Mammary epithelial cell (primary cell): ENCODE measurements at regions of chr17 and their contacts with region 1.

Region 1: GRCh38 chr17:27430882-27431491 is 25.3 kb upstream of the KSR1 start:
- DNase-seq: peak; percentile 44
- H3K4me3 ChIP-seq: no peak overlapping the region
- H3K27ac ChIP-seq: no peak overlapping the region
- H3K4me1 ChIP-seq: peaks cover 5% of the 10 kb centered on the region
- H3K27me3 ChIP-seq: no peaks in the 10 kb centered on the region
- CTCF ChIP-seq: peak; percentile 84 to 91

Region 2: GRCh38 chr17:27206447-27206846 is 224.5 kb before region 1 on chr17:
- CTCF ChIA-PET with region 1: no interaction called
- dilution Hi-C with region 1: no loop called
- in situ Hi-C with region 1: no loop called
- intact Hi-C with region 1: no loop called
- DNase-seq: no peak
- H3K4me3 ChIP-seq: no peak overlapping the region
- H3K27ac ChIP-seq: no peak overlapping the region
- H3K4me1 ChIP-seq: peaks cover 8% of the 10 kb centered on the region
- H3K27me3 ChIP-seq: no peaks in the 10 kb centered on the region
- CTCF ChIP-seq: peak; percentile 14 to 41

Region 3: GRCh38 chr17:27236717-27237315 is 194.2 kb before region 1 on chr17:
- CTCF ChIA-PET with region 1: no interaction called
- dilution Hi-C with region 1: no loop called
- in situ Hi-C with region 1: no loop called
- intact Hi-C with region 1: loop called (anchors 5 kb)
- DNase-seq: peak; percentile 52
- H3K4me3 ChIP-seq: no peak overlapping the region
- H3K27ac ChIP-seq: no peak overlapping the region
- H3K4me1 ChIP-seq: peaks cover 7% of the 10 kb centered on the region
- H3K27me3 ChIP-seq: no peaks in the 10 kb centered on the region
- CTCF ChIP-seq: peak; percentile 90 to 96

Region 4: DNA sequence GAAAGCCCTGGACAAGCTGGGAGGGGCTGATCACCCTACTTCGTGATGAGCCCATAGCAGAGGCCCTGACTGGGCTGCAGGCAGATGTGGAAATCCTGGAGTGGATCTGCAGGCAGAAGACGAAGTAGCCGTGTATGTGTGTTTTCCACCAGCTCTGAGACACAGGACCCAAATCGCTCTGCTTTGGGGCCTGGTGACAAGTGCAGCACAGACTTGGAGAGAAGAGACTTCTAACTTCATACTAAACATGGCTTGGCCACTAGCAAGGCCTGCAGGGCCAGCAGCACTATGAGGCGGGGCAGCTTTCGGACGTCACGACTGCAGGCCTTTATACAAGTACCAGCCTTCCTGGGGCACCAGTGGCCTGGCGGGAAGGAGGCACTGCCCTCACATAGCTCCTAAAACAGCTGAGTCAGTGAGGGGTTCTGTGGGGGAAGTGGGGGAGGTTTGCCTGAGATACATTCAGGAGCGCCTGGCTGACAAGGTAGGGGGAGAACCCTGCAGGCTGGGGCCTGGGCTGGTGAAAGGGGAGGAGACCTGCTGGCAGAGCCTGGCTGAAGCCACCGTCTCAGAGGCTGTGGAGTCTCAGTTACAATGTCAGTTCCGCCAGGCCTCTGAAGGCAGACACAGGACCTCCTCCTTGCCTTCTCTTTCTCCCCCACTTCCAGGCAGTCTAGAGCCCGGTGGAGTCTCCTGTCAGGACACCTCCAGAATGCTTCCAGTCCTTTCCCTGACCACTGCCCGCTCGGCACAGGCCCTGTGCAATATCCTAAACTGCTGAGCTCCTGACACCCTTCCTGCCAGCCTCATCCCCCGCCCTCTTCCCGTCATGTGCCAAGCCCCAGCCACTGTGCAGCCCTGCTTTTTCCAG is 63.6 kb before region 1 on chr17:
- CTCF ChIA-PET with region 1: no interaction called
- dilution Hi-C with region 1: no loop called
- in situ Hi-C with region 1: no loop called
- intact Hi-C with region 1: no loop called
- DNase-seq: no peak
- H3K4me3 ChIP-seq: no peak overlapping the region
- H3K27ac ChIP-seq: no peak overlapping the region
- H3K4me1 ChIP-seq: no peaks in the 10 kb centered on the region
- H3K27me3 ChIP-seq: no peaks in the 10 kb centered on the region
- CTCF ChIP-seq: no peak

Region 5: DNA sequence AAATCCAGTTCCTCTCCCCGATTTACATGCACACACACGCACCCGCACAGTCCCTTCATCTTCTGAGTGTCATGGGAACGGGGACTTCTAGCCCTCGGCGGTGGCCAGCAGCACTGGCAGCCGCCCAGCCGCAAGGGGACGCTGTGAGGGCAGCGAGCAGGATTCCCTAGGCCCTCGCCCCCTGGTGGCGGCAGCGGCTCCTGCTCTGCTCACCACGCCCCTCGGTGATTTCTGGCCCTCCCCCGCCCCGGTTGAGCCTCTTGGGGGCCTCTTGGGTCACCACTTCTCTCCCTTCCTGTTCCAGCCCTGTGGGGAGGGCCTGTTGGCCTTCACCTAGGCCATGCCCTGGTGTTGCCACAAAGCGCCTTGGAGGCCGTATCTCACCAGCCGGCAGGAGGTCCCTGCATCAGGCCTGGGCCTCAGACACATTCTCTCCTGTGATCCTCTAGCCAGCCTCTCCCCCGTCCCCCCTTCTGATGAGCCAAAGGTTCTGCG is 49.9 kb before region 1 on chr17:
- CTCF ChIA-PET with region 1: no interaction called
- dilution Hi-C with region 1: no loop called
- in situ Hi-C with region 1: no loop called
- intact Hi-C with region 1: loop called (anchors 1 kb)
- DNase-seq: peak; percentile 23
- H3K4me3 ChIP-seq: no peak overlapping the region
- H3K27ac ChIP-seq: no peak overlapping the region
- H3K4me1 ChIP-seq: peaks cover 35% of the 10 kb centered on the region
- H3K27me3 ChIP-seq: no peaks in the 10 kb centered on the region
- CTCF ChIP-seq: peak; percentile 78 to 84

Region 6: DNA sequence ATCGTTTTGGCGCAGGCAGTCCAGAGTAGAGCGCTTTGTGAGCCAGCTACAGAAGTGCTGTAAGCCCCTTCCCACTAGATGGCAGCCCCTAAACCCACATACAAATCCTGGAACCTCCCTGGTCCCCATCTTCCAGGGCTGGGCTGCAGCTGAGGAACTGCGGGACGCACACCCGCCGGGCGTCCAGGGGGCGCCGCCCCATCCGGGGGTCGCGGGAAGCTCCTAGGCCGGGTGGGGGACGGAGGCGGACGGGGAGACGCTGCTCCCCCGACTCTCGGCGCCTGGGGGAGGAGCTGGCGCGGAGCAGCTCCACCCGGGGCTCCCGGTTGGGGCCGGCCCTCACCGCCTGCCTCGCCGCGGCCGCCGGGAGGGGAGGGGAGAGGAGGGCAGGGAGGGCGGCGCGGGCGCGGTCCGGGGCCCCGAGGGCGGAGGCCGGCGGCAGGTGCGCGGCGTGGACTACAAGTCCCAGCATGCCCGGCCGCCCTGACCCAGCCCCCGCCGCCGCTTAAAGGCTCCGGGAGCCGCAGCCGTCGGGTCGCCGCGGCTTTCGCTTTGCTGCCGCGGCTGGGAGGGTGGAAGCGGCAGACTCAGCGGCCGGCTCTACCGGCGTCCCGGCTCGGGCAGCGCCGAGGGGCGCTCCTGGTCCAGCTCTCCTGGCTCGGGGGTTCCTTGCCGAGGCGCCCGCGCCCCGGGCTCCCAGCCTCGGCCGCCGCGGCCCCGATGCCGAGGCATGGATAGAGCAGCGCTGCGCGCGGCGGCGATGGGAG is 25.1 kb after region 1 on chr17 and contains the start of gene KSR1:
- CTCF ChIA-PET with region 1: no interaction called
- dilution Hi-C with region 1: no loop called
- in situ Hi-C with region 1: no loop called
- intact Hi-C with region 1: no loop called
- DNase-seq: peak; percentile 47
- H3K4me3 ChIP-seq: peak within 1 kb of the TSS; percentile 49 to 62 (median 52)
- H3K27ac ChIP-seq: no peak within 1 kb of the TSS
- H3K4me1 ChIP-seq: peaks cover 11% of the 10 kb centered on the region
- H3K27me3 ChIP-seq: peaks cover 9% of the 10 kb centered on the region
- CTCF ChIP-seq: peak in 1 of 2 donors; percentile 29
- total RNA-seq, gene KSR1: 1.6 to 1.7 TPM

Region 7: GRCh38 chr17:27489045-27489715 is 58.2 kb after region 1 on chr17:
- CTCF ChIA-PET with region 1: no interaction called
- dilution Hi-C with region 1: no loop called
- in situ Hi-C with region 1: loop called in 1 of 2 experiments (anchors 10 kb)
- intact Hi-C with region 1: no loop called
- DNase-seq: peak; percentile 35
- H3K4me3 ChIP-seq: no peak overlapping the region
- H3K27ac ChIP-seq: no peak overlapping the region
- H3K4me1 ChIP-seq: peaks cover 3% of the 10 kb centered on the region
- H3K27me3 ChIP-seq: no peaks in the 10 kb centered on the region
- CTCF ChIP-seq: no peak